ENCODE measurements at regions of chr13 and their contacts with region 1.

Region 1: GRCh38 chr13:78609464-78610205 is 6.3 kb upstream of the POU4F1 start:
- DNase-seq: no peak
- H3K4me3 Mint-ChIP-seq: peak overlapping the region; percentile 57
- H3K27ac Mint-ChIP-seq: no peak overlapping the region
- H3K4me1 Mint-ChIP-seq: peaks cover 15% of the 10 kb centered on the region
- H3K27me3 Mint-ChIP-seq: peaks cover 68% of the 10 kb centered on the region

Region 2: DNA sequence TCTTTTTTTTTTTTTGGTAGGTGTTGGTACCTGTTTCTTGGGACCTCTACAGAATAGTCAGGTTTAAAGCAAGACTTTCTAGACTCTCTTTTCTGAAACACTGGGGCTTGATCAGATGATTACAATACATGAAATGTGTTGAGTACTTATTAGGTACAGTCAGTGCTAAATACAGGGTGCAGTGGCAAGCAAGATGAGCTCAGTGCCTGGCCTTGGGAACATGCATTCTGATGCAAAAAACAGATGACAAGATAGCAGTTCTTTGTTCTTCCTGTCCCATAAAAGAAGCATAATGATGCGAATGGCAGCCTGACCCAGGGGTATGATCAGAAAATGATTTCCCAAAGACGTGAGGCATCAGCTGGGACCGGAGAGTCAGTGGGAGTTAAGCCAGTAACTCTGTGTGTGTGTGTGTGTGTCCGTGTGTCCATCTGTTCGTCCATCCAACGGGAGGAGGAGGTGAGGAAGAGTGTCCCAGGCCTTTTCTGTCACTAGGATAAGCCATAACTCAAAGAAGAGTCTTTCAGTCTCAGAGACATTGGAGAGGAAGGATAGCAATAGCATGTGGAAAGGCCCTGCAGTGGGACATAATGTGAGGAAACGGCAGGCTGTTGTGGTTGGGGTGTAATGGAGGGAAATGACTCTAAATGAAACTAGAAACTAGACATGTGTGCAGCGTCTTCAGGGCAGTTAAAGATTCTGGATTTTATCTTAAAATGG is 880.0 kb before region 1 on chr13:
- intact Hi-C with region 1: no loop called
- DNase-seq: peak; percentile 54
- H3K4me3 Mint-ChIP-seq: peak overlapping the region; percentile 59
- H3K27ac Mint-ChIP-seq: peak overlapping the region; percentile 78
- H3K4me1 Mint-ChIP-seq: peaks cover 50% of the 10 kb centered on the region
- H3K27me3 Mint-ChIP-seq: no peaks in the 10 kb centered on the region

Region 3: GRCh38 chr13:78364711-78365110 is 244.9 kb before region 1 on chr13:
- intact Hi-C with region 1: no loop called
- DNase-seq: no peak
- H3K4me3 Mint-ChIP-seq: no peak overlapping the region
- H3K27ac Mint-ChIP-seq: no peak overlapping the region
- H3K4me1 Mint-ChIP-seq: no peaks in the 10 kb centered on the region
- H3K27me3 Mint-ChIP-seq: no peaks in the 10 kb centered on the region

Region 4: GRCh38 chr13:78572459-78572858 is 37.2 kb before region 1 on chr13:
- intact Hi-C with region 1: no loop called
- DNase-seq: no peak
- H3K4me3 Mint-ChIP-seq: no peak overlapping the region
- H3K27ac Mint-ChIP-seq: no peak overlapping the region
- H3K4me1 Mint-ChIP-seq: no peaks in the 10 kb centered on the region
- H3K27me3 Mint-ChIP-seq: no peaks in the 10 kb centered on the region

Region 5: DNA sequence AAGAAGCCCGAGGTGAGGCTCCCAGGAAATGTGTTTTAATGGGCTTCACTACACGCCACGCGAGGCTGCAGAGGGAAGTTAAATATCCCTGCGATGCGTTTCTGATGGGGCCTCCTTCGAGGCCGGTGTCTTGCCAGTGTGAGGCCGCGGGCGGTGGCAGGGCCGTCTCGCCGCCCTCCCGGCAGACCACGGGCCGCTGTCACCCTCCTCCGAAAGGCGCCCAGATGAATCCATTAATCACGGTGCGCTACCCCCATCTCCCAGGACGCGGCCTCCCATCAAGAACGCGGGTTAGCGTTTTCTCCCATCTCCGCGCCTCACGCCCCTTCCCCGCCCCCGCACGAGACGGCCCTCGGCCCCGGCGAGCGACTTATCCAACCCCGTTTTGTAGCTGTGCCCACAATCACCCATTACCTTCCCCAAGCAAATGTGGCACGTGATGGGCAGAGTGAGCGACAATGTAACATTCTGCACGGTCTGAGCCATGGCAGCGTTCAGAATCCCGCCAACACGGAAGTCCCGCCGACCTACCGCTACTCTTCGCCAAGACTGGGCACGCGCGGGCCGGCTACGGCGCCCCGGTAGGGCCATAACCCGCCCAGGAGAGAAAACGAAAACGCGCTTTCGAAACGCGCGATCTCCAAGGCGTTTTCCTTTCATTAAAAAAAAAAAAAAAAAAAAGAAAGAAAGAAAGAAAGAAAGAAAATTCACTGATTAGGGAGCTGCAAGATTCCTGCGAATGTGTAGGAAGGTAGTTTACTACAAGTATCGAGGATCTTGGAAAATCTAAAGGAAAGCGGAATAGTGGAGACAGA is 49.2 kb after region 1 on chr13 and contains the start of gene OBI1:
- intact Hi-C with region 1: loop called (anchors 2 kb)
- DNase-seq: peak; percentile 84
- H3K4me3 Mint-ChIP-seq: peak within 1 kb of the TSS; percentile 96
- H3K27ac Mint-ChIP-seq: peak within 1 kb of the TSS; percentile 97
- H3K4me1 Mint-ChIP-seq: peaks cover 36% of the 10 kb centered on the region
- H3K27me3 Mint-ChIP-seq: no peaks in the 10 kb centered on the region
- total RNA-seq, gene OBI1: 20.0 and 21.1 TPM in 2 replicates